Kidney (tissue), 22 donors: ENCODE measurements at regions of chr14 and their contacts with region 1.

Region 1: GRCh38 chr14:95993768-95994592 is 45.2 kb upstream of the C14orf132 start:
- DNase-seq: peak in 3 of 5 donors; percentile 31 to 85 (median 63)
- H3K4me3 ChIP-seq: no peak overlapping the region
- H3K27ac ChIP-seq: no peak overlapping the region
- H3K4me1 ChIP-seq: no peaks in the 10 kb centered on the region
- H3K27me3 ChIP-seq: no peaks in the 10 kb centered on the region
- CTCF ChIP-seq: peak; percentile 84

Region 2: DNA sequence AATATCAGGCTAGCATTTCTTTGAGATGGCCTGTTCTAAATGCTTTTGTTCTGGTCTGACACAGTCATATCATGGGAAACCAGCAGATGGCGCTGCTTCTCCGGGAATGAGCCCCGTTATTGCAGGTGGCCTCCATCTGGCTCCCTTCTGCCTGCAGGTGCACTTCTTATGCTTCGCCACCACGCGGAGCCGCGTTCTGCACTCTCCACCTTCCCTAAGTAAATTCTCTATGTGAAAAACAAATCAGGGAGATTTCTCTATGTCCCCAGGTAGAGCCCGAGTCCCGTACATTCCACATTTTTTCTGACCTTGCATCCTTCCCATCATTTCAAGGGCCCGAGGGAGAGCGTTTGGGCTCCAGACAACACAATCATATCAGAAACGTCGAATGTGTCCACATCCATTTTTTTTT is 433.0 kb before region 1 on chr14:
- intact Hi-C with region 1: loop called (anchors 5 kb)
- DNase-seq: peak; percentile 88 to 94 (median 93)
- H3K4me3 ChIP-seq: no peak overlapping the region
- H3K27ac ChIP-seq: no peak overlapping the region
- H3K4me1 ChIP-seq: peaks cover 0 to 3% (median 0%) of the 10 kb centered on the region in 3 donors
- H3K27me3 ChIP-seq: no peaks in the 10 kb centered on the region
- CTCF ChIP-seq: peak; percentile 97

Region 3: DNA sequence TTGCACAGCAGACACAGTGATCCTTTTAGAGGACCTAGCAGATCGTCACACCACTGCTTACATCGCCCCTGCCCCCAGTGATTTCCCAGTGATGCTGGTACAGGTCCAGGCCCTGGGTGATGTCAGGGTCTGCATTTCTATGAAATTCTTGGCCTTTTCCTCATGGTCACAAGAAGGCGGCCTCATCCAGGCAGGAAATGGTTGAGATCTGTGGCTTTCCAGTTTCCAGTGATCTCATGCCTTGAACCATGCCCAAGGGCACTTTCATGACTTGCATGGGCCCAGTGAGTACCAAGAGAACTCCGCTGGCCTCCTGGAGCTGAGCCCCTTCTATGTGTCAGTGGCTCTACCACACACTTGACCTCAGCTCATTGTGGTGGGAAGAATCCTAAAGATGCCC is 168.8 kb after region 1 on chr14:
- intact Hi-C with region 1: no loop called
- DNase-seq: peak in 1 of 5 donors; percentile 13
- H3K4me3 ChIP-seq: no peak overlapping the region
- H3K27ac ChIP-seq: no peak overlapping the region
- H3K4me1 ChIP-seq: peaks cover 0 to 13% (median 0%) of the 10 kb centered on the region in 3 donors
- H3K27me3 ChIP-seq: no peaks in the 10 kb centered on the region
- CTCF ChIP-seq: no peak

Region 4: GRCh38 chr14:96287856-96288255 is 293.9 kb after region 1 on chr14:
- intact Hi-C with region 1: no loop called
- DNase-seq: no peak
- H3K4me3 ChIP-seq: no peak overlapping the region
- H3K27ac ChIP-seq: no peak overlapping the region
- H3K4me1 ChIP-seq: no peaks in the 10 kb centered on the region
- H3K27me3 ChIP-seq: no peaks in the 10 kb centered on the region
- CTCF ChIP-seq: no peak